Left ventricle myocardium superior (tissue), 1 donor: ENCODE measurements at regions of chr14 and their contacts with region 1.

Region 1: DNA sequence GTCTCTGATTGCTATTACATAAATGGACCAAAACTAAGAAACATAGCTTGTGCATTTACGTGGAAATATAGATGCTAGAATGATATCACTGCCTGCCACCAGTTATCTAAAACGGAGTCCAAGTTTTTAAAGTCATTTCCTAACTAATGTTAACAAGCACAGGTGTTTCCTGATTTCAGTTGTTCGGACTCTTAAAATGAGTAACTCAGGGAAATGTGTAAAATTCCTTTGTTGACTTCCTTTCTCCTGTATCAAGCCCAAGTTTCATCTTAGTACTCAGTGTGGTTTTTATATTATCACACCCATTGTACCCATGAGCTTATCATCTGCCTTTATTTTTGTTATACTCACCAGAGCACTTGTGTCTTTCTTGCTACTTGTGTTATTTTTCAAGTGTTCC is 13.2 kb upstream of the PRKCH start:
- DNase-seq: no peak
- ATAC-seq: peak; percentile 61

Region 2: GRCh38 chr14:60945984-60946383 is 362.2 kb before region 1 on chr14:
- intact Hi-C with region 1: no loop called
- DNase-seq: no peak
- ATAC-seq: no peak

Region 3: DNA sequence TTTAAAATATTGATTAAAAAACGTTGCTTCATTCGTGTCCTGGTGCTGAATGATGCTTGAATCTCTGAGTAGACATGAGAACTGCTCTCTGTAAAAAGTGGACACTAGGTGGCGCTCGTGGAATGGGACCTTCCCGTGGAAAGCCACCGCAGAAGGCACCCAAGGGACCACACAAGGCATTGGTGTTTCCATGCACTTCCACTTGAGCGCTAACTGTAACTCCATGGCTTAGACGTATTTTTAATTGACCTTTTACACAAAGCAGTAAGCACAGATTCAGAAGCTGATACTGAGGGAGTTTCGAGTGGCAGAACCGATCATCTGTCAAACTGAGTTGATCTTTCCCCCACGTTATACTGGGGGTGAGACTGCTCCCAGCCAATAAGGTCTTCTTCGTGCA is 148.5 kb after region 1 on chr14:
- intact Hi-C with region 1: loop called (anchors 10 kb)
- DNase-seq: peak; percentile 74
- ATAC-seq: peak; percentile 80